ENCODE measurements at regions of chr1 and their contacts with region 1.

Region 1: GRCh38 chr1:44775078-44775929 is at the start of gene RPS8:
- DNase-seq: peak; percentile 56 to 96
- H3K4me3 ChIP-seq: peak within 1 kb of the TSS; percentile 60 to 78
- H3K27ac ChIP-seq: peak within 1 kb of the TSS; percentile 89 to 93
- H3K4me1 ChIP-seq: peaks cover 8 to 9% of the 10 kb centered on the region in 2 donors
- H3K27me3 ChIP-seq: no peaks in the 10 kb centered on the region
- CTCF ChIP-seq: no peak
- total RNA-seq, gene RPS8: 1,693 TPM

Region 2: GRCh38 chr1:44339731-44340130 is 435.6 kb before region 1 on chr1:
- intact Hi-C with region 1: no loop called
- DNase-seq: no peak
- H3K4me3 ChIP-seq: no peak overlapping the region
- H3K27ac ChIP-seq: no peak overlapping the region
- H3K4me1 ChIP-seq: peaks cover 0 to 1% of the 10 kb centered on the region in 2 donors
- H3K27me3 ChIP-seq: no peaks in the 10 kb centered on the region
- CTCF ChIP-seq: no peak

Region 3: GRCh38 chr1:44739361-44740178 is 35.7 kb before region 1 on chr1 and contains the start of gene KIF2C:
- intact Hi-C with region 1: loop called (anchors 1 kb)
- DNase-seq: peak; percentile 85 to 98
- H3K4me3 ChIP-seq: peak within 1 kb of the TSS; percentile 53 to 63
- H3K27ac ChIP-seq: peak within 1 kb of the TSS; percentile 77 to 82
- H3K4me1 ChIP-seq: peaks cover 3 to 6% of the 10 kb centered on the region in 2 donors
- H3K27me3 ChIP-seq: no peaks in the 10 kb centered on the region
- CTCF ChIP-seq: no peak
- total RNA-seq, gene KIF2C: 0.53 TPM

Region 4: DNA sequence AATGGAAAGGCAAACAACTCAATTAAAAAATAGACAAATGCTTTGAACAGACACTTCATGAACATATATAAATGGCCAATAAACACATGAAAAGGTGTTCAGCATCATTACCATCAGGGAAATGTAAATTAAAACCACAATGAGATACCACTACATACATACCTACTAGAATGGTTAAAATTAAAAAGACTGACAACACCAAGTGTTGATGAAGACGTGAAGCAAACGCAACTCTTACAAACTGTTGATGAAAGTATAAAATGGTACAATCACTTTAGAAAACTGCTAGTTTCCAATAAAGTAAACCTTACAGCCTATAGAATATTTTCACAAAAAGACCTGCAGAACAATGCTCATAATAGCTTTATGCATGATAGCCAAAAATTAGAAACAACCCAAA is 200.9 kb after region 1 on chr1:
- intact Hi-C with region 1: no loop called
- DNase-seq: no peak
- H3K4me3 ChIP-seq: no peak overlapping the region
- H3K27ac ChIP-seq: no peak overlapping the region
- H3K4me1 ChIP-seq: no peaks in the 10 kb centered on the region
- H3K27me3 ChIP-seq: no peaks in the 10 kb centered on the region
- CTCF ChIP-seq: no peak

Measured in ascending aorta (tissue), 2 donors.